Ascending aorta (tissue), 2 donors: ENCODE measurements at regions of chr9 and their contacts with region 1.

Region 1: GRCh38 chr9:127828262-127829031 is 25.8 kb downstream of the FPGS start:
- DNase-seq: peak; percentile 67 to 93
- H3K4me3 ChIP-seq: peak overlapping the region; percentile 34 to 48
- H3K27ac ChIP-seq: peak overlapping the region; percentile 89 to 95
- H3K4me1 ChIP-seq: peaks cover 20 to 59% of the 10 kb centered on the region in 2 donors
- H3K27me3 ChIP-seq: no peaks in the 10 kb centered on the region
- CTCF ChIP-seq: no peak

Region 2: GRCh38 chr9:127862075-127863011 is 33.9 kb after region 1 on chr9:
- intact Hi-C with region 1: loop called (anchors 5 kb)
- DNase-seq: peak; percentile 49 to 88
- H3K4me3 ChIP-seq: no peak overlapping the region
- H3K27ac ChIP-seq: peak overlapping the region; percentile 96 to 97
- H3K4me1 ChIP-seq: peaks cover 21 to 51% of the 10 kb centered on the region in 2 donors
- H3K27me3 ChIP-seq: no peaks in the 10 kb centered on the region
- CTCF ChIP-seq: no peak

Region 3: GRCh38 chr9:127869310-127870152 is 41.1 kb after region 1 on chr9:
- intact Hi-C with region 1: loop called (anchors 2 kb)
- DNase-seq: peak; percentile 55 to 93
- H3K4me3 ChIP-seq: no peak overlapping the region
- H3K27ac ChIP-seq: peak overlapping the region; percentile 63 to 67
- H3K4me1 ChIP-seq: peaks cover 13% of the 10 kb centered on the region in 2 donors
- H3K27me3 ChIP-seq: no peaks in the 10 kb centered on the region
- CTCF ChIP-seq: peak; percentile 84 to 97 (median 88)

Region 4: DNA sequence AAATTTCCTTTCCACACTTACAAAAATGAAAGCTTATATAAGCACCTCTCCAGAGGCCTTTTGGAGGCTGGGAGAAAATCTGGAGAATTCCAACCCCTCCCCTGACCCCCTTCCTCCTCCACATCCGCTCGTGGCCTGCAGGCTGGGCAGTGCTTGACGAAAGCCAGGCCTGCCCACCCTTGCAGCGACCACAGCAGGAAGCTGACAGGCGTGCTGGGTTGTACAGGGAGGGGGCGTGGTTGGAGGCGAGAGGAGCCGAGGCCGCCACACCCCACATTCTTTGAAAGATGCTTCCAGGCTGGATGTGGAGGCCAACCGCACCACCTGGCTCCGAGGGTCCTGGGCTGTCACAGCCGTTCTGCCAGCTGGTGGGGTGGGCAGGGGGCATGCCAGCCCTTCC is 1397.4 kb after region 1 on chr9:
- intact Hi-C with region 1: no loop called
- DNase-seq: no peak
- H3K4me3 ChIP-seq: no peak overlapping the region
- H3K27ac ChIP-seq: peak overlapping the region in 1 of 2 donors; percentile 49
- H3K4me1 ChIP-seq: no peaks in the 10 kb centered on the region
- H3K27me3 ChIP-seq: no peaks in the 10 kb centered on the region
- CTCF ChIP-seq: no peak